Lower leg skin (tissue), 4 donors: ENCODE measurements at regions of chr2 and their contacts with region 1.

Region 1: GRCh38 chr2:68441179-68441993 is 25.7 kb downstream of the FBXO48 start:
- DNase-seq: peak; percentile 81 to 92
- H3K4me3 ChIP-seq: no peak overlapping the region
- CTCF ChIP-seq: peak in 1 of 3 donors; percentile 75
- POLR2A ChIP-seq: no peak

Region 2: GRCh38 chr2:68362069-68362468 is 79.3 kb before region 1 on chr2:
- intact Hi-C with region 1: loop called (anchors 5 kb)
- DNase-seq: peak; percentile 53 to 93
- H3K4me3 ChIP-seq: no peak overlapping the region
- CTCF ChIP-seq: peak in 1 of 3 donors; percentile 28
- POLR2A ChIP-seq: no peak